ENCODE measurements at regions of chr17 and their contacts with region 1.

Region 1: GRCh38 chr17:59106463-59107305 is at the start of gene TRIM37:
- DNase-seq: peak; percentile 97 to 99 (median 97)
- ATAC-seq: peak; percentile 98
- H3K4me3 ChIP-seq: peak within 1 kb of the TSS; percentile 86
- H3K27ac ChIP-seq: peak within 1 kb of the TSS; percentile 87
- H3K4me1 ChIP-seq: peaks cover 9 to 17% of the 10 kb centered on the region in 2 experiments; a peak in 4 of 5 replicates
- H3K27me3 ChIP-seq: no peaks in the 10 kb centered on the region
- CTCF ChIP-seq: peak in 2 of 3 experiments; percentile 21 to 28; a peak in 3 of 6 replicates
- EP300 ChIP-seq: peak; percentile 10; the same call in 1 of the 2 replicates
- POLR2A ChIP-seq: peak; percentile 88
- RAD21 ChIP-seq: 0 out of 4 replicates have a peak, but pooled peaks of 1 of the 2 experiments have one; percentile 12
- polyA plus RNA-seq, gene TRIM37: 4.5 to 8.6 TPM

Region 2: DNA sequence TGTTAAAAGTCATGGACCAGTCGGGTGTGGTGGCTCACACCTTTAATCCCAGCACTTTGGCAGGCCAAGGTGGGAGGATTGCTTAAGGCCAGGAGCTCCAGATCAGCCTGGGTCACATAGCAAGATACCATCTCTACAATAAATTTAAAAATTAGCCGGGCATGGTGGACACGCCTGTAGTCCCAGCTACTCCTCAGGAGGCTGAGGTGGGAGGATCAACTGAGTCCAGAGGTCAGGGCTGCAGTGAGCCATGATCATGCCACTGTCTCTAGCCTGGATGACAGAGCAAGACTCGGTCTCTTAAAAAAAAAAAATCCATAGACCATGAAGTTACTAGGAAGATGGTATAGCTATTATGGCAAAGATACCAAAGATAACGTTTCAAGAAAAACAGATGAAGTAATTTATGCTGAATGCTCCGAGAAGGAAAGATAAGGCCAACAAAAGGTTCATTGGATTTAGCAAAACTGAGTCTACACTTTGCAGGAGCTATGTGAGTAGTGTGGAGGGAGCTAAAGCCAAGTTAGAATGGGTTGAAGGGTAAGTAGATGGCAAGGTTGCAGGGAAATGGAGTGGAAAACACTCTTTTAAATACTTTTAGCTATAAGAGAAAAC is 11.7 kb before region 1 on chr17:
- CTCF ChIA-PET with region 1: no interaction called
- POLR2A ChIA-PET with region 1: interaction called, 12 read pairs
- in situ Hi-C with region 1: no loop called
- intact Hi-C with region 1: no loop called
- DNase-seq: peak in 1 of 4 experiments; percentile 14
- ATAC-seq: peak; percentile 71
- H3K4me3 ChIP-seq: no peak overlapping the region
- H3K27ac ChIP-seq: peak overlapping the region; percentile 29; the same call in 1 of the 3 replicates
- H3K4me1 ChIP-seq: peaks cover 4 to 12% of the 10 kb centered on the region in 2 experiments
- H3K27me3 ChIP-seq: no peaks in the 10 kb centered on the region
- CTCF ChIP-seq: no peak
- EP300 ChIP-seq: no peak
- POLR2A ChIP-seq: no peak
- RAD21 ChIP-seq: no peak

Measured in K562 (cell line).